ENCODE measurements at regions of chr20 and their contacts with region 1.

Region 1: DNA sequence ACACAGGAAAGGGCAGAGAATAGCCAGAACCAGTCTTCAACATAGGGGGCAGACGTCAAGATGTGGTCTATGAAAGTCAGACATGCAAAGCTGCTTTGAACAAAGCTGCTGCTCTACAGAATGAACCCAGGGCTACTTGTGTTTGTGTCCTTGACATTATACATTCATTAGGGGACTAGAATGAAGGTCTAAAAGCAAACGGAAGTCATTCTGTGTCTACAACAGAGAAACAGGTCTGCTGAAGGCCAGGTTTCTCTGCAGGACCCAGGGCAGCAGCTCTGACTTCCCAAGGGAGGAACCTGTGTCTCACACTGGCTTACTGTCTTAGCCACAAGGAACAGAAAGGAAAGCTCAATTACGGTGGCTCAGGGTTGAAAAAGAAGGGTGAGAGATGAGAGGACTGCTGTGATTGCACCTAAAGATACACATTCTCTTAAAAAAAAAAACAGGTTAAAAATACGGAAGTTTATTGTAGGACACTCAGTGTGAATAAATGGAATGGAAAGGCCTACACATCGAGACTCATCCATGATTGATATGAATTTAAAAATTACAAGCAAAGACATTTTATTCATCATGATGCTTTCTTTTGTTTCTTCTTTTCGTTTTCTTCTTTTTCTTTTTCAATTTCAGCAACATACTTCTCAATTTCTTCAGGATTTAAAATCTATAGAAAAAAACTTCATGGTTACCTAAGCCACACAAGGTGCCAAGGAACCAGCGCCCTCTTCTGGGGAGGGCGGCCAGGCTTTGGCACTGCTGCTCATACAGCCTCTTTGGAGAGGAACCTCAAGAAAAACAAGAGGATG is 6.7 kb downstream of the PSMA7 start:
- DNase-seq: peak; percentile 60 to 91 (median 85)
- ATAC-seq: peak in 1 of 2 donors; percentile 19
- H3K4me3 ChIP-seq: no peak overlapping the region
- H3K27ac ChIP-seq: no peak overlapping the region
- H3K4me1 ChIP-seq: peaks cover 8% of the 10 kb centered on the region
- H3K27me3 ChIP-seq: no peaks in the 10 kb centered on the region

Region 2: GRCh38 chr20:62010551-62011402 is 125.7 kb before region 1 on chr20:
- intact Hi-C with region 1: loop called in 2 of 4 experiments (anchors 5 to 10 kb)
- DNase-seq: peak; percentile 51 to 78 (median 72)
- ATAC-seq: peak; percentile 55 to 68
- H3K4me3 ChIP-seq: no peak overlapping the region
- H3K27ac ChIP-seq: no peak overlapping the region
- H3K4me1 ChIP-seq: no peaks in the 10 kb centered on the region
- H3K27me3 ChIP-seq: no peaks in the 10 kb centered on the region

Region 3: DNA sequence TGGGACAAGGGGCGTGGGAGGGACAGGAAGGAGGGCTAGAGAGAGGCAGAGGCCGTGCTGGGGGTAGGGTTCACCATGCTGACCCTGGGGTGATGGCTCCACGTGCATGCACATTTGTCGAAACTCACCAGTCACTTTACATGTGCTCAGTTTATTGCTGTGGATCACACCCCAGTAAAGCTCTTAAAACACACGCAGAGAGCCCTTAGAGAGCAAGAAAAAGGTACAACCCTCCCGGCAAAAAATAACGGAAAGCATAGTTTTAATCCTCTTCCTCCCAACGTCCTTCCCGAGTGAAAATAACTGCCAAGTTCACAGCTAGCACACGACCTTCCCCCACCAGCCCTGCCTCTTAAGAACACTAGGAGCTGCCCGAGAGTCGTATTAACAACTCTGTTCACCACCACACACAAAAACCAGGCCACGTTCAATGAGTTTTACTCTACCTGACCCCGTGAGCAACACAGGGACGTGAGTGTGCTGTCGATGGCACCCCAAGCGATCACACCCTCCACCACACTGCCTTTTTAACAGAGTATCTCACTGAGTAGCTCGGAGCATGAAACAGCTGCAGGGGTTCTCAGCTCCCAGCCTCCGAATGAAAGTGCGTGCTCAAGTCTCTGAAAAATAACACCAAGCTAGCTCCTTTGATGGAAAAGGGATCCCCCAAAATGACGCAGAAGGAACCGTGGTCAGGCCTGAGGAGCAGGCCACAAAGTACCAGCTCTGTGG is 110.5 kb before region 1 on chr20:
- intact Hi-C with region 1: loop called in 3 of 4 experiments (anchors 5 kb)
- DNase-seq: peak in 1 of 3 donors; percentile 73
- ATAC-seq: peak; percentile 76 to 82
- H3K4me3 ChIP-seq: no peak overlapping the region
- H3K27ac ChIP-seq: no peak overlapping the region
- H3K4me1 ChIP-seq: peaks cover 4% of the 10 kb centered on the region
- H3K27me3 ChIP-seq: no peaks in the 10 kb centered on the region

Region 4: DNA sequence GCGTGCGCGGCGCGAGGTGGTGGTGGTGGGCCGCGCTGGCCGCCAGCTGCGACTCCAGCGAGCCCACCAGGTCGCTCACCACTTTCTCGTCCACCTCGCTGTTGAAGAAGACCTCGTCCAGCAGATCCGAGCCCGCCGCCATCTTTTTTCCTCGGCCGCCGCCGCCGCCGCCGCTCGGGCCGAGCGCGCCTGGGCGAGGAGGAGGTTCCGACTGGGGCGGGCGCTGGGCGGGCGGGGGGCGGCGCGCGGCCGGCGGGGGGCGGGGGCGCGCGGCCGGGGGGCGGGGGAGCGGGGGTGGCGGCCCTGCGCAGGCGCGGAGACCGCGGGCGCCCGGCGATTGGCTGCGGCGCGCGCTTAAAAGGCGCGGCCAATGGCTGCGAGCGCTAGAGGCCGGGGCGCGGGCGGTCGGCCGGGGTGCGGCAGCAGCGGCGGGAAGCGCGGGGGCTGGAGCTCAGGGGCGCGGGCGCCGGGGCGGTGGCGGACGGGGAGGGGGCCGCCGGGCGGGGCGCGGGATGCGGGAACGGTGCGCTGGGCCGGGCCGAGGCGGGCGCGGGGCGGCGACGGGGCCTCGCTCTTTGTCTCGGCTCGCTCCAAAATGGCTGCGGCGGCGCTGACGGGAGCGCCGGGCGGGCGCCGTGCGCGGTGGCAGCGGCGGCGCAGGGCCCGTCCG is 70.7 kb before region 1 on chr20 and contains the start of gene TAF4:
- intact Hi-C with region 1: loop called in 1 of 4 experiments (anchors 5 kb)
- DNase-seq: peak; percentile 76 to 92 (median 92)
- ATAC-seq: peak; percentile 58 to 71
- H3K4me3 ChIP-seq: peak within 1 kb of the TSS; percentile 82
- H3K27ac ChIP-seq: peak within 1 kb of the TSS; percentile 44
- H3K4me1 ChIP-seq: peaks cover 6% of the 10 kb centered on the region
- H3K27me3 ChIP-seq: no peaks in the 10 kb centered on the region
- total RNA-seq, gene TAF4: 7.0 to 13.6 (median 8.6) TPM